Breast epithelium (tissue), 4 donors: ENCODE measurements at regions of chr7 and their contacts with region 1.

Region 1: DNA sequence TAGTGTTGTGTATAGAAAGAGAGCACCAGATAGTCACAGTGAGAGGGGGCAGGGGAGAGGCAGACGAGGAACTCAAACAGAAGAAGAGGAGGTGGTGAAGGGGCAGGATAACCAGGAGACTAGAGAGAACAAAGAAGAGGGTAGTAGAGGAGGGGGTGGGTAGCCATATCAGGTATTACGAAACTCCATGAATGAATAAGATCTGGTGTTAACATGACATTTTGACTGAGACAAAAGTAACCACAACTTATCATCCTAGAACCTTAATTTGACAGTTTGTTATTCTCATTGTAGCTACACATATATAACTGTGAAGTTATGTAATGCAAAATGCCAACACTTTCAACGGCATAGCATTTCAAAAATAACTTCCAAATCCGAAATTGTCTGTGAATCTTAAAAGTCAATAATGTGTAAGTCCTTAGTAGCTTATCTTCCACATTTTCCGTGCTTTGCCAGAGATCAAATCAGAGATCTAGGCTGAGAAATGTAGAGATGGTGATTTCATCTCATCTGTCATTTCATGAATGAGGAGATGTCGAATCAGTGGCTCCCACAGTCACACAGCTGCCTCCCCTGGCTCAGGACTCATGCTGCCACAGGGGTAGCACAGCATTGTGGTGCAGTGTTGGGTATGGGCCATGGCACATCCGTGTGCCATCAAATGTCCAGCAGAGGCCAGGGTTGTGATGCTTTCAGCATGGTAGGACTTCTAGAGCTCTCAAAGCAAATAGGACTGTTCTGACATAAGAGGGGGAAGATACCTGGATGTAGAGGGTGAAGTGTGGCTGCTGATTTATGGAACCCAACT is 202.1 kb downstream of the HECW1 start:
- DNase-seq: no peak
- H3K4me3 ChIP-seq: no peak overlapping the region
- H3K27ac ChIP-seq: no peak overlapping the region
- H3K4me1 ChIP-seq: no peaks in the 10 kb centered on the region
- H3K27me3 ChIP-seq: no peaks in the 10 kb centered on the region
- CTCF ChIP-seq: no peak
- POLR2A ChIP-seq: no peak

Region 2: DNA sequence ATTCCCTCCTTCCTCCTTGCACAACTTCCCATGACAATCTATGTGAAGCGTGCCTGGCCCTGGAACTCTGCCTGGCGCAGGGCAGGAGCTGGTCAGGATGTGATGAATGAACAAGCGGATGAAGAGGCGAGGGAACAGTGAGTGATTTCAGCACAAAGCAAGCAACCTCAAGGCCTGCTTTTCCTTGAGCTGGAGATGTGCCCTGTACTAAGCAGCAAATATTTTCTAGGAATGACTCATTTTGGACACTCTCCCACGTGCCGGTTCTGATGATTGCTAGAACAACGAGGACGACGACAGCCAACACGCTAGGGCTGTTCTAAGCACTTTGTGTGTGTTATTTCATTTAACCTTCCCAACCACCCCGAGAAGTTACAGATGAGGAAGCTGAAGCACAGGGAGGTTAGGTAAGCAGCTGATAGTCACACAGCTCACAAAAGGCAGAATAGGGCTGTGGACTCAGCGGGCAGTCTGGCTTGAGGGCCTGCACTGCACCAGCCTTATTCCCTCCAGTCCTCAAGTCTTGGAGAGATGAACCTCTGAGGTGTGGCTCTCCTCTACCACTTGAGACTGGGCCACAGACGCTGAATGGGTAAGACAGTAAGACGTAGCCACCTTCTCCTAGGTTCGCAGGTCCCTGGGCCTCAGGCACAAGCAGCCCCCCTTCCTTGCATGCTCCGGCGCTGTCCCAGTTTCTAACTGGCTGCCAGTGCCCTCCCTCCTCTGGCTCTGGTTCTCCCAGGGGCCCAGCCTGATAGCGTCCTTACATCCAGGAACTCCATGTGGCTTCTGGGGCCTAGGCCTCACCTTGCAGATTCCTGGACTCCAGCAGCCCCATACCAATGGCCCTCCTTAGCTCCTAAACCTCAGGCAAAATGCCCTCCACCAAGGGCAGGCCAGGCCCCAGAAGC is 945.2 kb after region 1 on chr7:
- intact Hi-C with region 1: loop called (anchors 10 kb)
- DNase-seq: peak in 1 of 2 donors; percentile 70
- H3K4me3 ChIP-seq: no peak overlapping the region
- H3K27ac ChIP-seq: peak overlapping the region; percentile 68 to 90
- H3K4me1 ChIP-seq: peaks cover 5 to 20% of the 10 kb centered on the region in 2 donors
- H3K27me3 ChIP-seq: no peaks in the 10 kb centered on the region
- CTCF ChIP-seq: no peak
- POLR2A ChIP-seq: no peak